Endothelial cell of umbilical vein (primary cell): ENCODE measurements at regions of chr14 and their contacts with region 1.

Region 1: GRCh38 chr14:22556990-22557623 is 31.9 kb downstream of the DAD1 start:
- DNase-seq: peak; percentile 71
- H3K4me3 ChIP-seq: peak overlapping the region in 2 of 3 experiments; percentile 10 to 14
- H3K27ac ChIP-seq: peak overlapping the region; percentile 88
- H3K4me1 ChIP-seq: peaks cover 52% of the 10 kb centered on the region
- H3K27me3 ChIP-seq: no peaks in the 10 kb centered on the region
- CTCF ChIP-seq: peak; percentile 84 to 99
- POLR2A ChIP-seq: no peak

Region 2: GRCh38 chr14:21978184-21978998 is 578.7 kb before region 1 on chr14:
- CTCF ChIA-PET with region 1: no interaction called
- POLR2A ChIA-PET with region 1: no interaction called
- dilution Hi-C with region 1: no loop called
- intact Hi-C with region 1: no loop called
- DNase-seq: peak; percentile 41
- H3K4me3 ChIP-seq: no peak overlapping the region
- H3K27ac ChIP-seq: no peak overlapping the region
- H3K4me1 ChIP-seq: no peaks in the 10 kb centered on the region
- H3K27me3 ChIP-seq: peaks cover 7 to 10% of the 10 kb centered on the region in 2 experiments
- CTCF ChIP-seq: peak; percentile 78 to 87
- POLR2A ChIP-seq: no peak

Region 3: DNA sequence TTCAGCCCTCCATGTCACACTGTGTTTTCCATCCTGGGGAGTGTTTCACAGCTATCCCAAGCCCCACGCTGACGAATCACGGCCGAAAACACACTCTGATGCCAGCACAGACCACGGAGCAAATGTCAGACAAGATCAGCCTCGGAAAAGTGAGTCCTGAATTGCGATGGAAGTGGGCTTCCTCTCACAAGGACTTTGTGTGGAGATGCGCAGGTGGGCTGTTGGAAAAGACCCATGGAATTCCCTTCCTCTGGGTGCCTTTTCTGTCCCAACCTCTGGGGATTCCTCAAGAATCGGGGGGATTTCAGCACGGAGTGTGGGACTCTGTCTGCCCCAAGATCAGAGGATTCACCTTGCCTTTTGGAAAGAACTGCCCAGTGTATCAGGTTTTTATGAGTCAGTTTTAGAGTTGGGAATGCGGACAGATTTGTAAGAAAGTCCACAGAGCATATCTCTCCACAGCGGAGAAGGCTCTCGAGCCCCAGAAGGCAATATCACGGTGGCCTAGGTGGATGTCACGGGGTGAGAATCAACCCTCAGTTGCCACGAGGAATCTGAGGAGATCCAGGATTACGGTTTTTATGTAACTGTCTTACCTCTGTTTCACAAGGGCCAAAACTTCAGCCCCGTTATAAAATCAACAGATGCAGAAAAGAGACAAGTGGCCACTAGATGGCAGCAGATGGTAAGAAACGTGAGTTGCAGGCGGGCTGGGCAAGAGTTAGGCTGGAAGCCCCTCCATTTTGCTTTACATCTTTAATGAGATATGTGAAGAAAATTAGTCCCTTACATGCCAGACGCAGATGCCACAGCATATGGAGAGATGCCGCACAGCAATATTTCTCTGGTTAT is 170.0 kb before region 1 on chr14:
- CTCF ChIA-PET with region 1: interaction called, 35 read pairs
- POLR2A ChIA-PET with region 1: no interaction called
- dilution Hi-C with region 1: no loop called
- intact Hi-C with region 1: loop called (anchors 1 kb)
- DNase-seq: peak; percentile 77
- H3K4me3 ChIP-seq: no peak overlapping the region
- H3K27ac ChIP-seq: no peak overlapping the region
- H3K4me1 ChIP-seq: peaks cover 6% of the 10 kb centered on the region
- H3K27me3 ChIP-seq: peaks cover 6 to 15% of the 10 kb centered on the region in 2 experiments
- CTCF ChIP-seq: peak; percentile 68 to 70
- POLR2A ChIP-seq: no peak

Region 4: DNA sequence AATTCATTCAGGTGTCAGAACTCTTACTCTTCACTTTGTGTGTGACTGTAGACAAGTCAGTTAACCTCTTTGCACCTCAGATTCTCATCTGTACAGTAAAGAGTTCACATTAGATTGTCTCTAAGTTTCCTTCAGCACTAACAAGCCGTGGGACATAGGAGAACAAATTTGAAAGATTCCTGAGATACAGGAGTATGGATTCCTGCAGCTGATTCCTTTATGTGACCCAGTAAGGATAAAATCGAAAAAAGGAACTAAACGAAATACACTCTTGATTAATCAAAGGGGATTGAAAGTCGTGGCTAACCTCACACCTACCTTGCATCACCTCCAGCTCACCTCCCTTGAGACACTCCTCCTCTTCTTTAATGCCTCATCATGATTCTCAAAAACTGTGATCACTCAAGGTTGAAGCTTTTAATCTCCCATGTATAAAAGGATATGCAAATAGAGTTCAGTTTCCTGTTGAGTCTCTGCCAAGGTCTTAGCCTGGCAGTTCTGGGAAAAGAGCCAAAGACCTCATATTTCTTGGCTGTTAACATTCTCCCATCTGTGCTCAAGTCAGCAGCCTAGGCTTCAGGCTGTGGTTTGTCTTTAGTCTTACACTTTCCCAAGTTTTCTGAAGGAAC is 124.6 kb before region 1 on chr14:
- CTCF ChIA-PET with region 1: no interaction called
- POLR2A ChIA-PET with region 1: no interaction called
- dilution Hi-C with region 1: no loop called
- intact Hi-C with region 1: no loop called
- DNase-seq: peak; percentile 97
- H3K4me3 ChIP-seq: no peak overlapping the region
- H3K27ac ChIP-seq: no peak overlapping the region
- H3K4me1 ChIP-seq: peaks cover 29% of the 10 kb centered on the region
- H3K27me3 ChIP-seq: peaks cover 4 to 6% of the 10 kb centered on the region in 2 experiments
- CTCF ChIP-seq: no peak
- POLR2A ChIP-seq: no peak

Region 5: GRCh38 chr14:22545842-22546721 is 11.0 kb before region 1 on chr14:
- CTCF ChIA-PET with region 1: interaction called, 19 read pairs
- POLR2A ChIA-PET with region 1: no interaction called
- dilution Hi-C with region 1: no loop called
- intact Hi-C with region 1: no loop called
- DNase-seq: peak; percentile 93
- H3K4me3 ChIP-seq: no peak overlapping the region
- H3K27ac ChIP-seq: peak overlapping the region; percentile 86
- H3K4me1 ChIP-seq: peaks cover 48% of the 10 kb centered on the region
- H3K27me3 ChIP-seq: no peaks in the 10 kb centered on the region
- CTCF ChIP-seq: no peak
- POLR2A ChIP-seq: no peak

Region 6: DNA sequence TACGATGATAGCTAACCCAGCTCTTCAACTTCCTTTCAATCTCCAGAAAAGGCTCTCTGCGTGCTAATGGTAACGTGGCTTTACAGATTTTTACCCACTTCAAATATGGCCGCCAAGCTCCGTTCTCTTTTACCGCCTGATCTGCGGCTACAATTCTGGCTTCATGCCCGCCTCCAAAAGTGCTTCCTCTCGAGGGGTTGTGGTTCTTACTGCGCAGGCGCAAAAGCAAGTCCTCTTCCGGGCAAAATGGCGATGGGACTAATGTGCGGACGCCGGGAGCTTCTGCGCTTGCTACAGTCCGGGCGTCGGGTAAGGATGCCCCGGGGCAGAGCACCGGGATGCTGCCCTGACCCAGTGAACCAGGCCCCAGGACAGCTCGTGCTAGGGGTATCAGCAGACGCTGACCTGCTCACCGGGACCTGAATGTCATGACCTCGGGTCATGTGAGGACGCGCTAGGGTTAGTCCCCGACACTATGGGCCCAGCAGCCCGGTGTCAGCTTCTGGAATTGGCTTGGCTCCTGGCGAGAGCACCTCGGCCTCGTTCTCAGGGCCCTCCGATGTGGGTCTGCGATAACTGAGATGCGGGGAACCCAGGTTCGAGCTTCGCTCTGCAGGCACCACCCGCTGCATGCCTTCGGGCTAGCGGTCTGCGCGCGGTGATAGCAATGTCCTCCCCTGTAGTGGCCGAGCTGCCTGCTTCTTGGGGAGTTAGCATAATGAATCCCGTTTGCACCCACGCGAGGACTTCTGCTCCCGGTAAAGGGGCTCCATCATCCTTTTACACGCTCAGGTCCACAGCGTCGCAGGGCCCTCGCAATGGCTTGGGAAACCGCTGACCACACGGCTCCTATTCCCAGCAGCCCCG is 209.6 kb after region 1 on chr14 and contains the start of gene OXA1L:
- CTCF ChIA-PET with region 1: no interaction called
- POLR2A ChIA-PET with region 1: no interaction called
- dilution Hi-C with region 1: no loop called
- intact Hi-C with region 1: loop called (anchors 5 kb)
- DNase-seq: peak; percentile 98
- H3K4me3 ChIP-seq: peak within 1 kb of the TSS; percentile 77 to 99 (median 92)
- H3K27ac ChIP-seq: peak within 1 kb of the TSS; percentile 84
- H3K4me1 ChIP-seq: peaks cover 24% of the 10 kb centered on the region
- H3K27me3 ChIP-seq: no peaks in the 10 kb centered on the region
- CTCF ChIP-seq: no peak
- POLR2A ChIP-seq: peak; percentile 81
- total RNA-seq, gene OXA1L: 200 and 212 TPM in 2 replicates

Region 7: GRCh38 chr14:22872033-22872832 is 315.1 kb after region 1 on chr14:
- CTCF ChIA-PET with region 1: interaction called, 4 read pairs
- POLR2A ChIA-PET with region 1: no interaction called
- dilution Hi-C with region 1: no loop called
- intact Hi-C with region 1: loop called (anchors 1 kb)
- DNase-seq: peak; percentile 87
- H3K4me3 ChIP-seq: peak overlapping the region; percentile 68 to 78 (median 76)
- H3K27ac ChIP-seq: peak overlapping the region; percentile 89
- H3K4me1 ChIP-seq: peaks cover 18% of the 10 kb centered on the region
- H3K27me3 ChIP-seq: no peaks in the 10 kb centered on the region
- CTCF ChIP-seq: peak; percentile 90 to 97
- POLR2A ChIP-seq: peak; percentile 59

Region 8: DNA sequence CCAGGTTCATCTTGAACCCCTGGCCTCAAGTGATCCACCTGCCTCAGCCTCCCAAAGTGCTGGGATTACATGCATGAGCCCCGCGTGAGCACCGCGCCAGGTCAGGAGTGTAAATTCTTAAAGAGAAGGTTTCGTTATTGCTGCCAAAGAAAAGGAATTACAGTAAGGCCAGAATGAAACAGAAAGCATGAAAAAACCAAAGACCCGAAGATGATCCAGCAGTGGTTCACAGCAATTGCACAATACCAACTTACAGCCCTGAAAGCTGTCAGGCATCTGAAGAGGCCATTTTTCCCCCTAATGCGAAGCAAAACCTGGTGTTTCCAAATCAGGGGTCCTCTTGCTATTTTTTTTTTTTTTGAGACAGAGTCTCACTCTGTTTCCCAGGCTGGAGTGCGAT is 351.5 kb after region 1 on chr14:
- CTCF ChIA-PET with region 1: no interaction called
- POLR2A ChIA-PET with region 1: no interaction called
- dilution Hi-C with region 1: no loop called
- intact Hi-C with region 1: no loop called
- DNase-seq: no peak
- H3K4me3 ChIP-seq: no peak overlapping the region
- H3K27ac ChIP-seq: no peak overlapping the region
- H3K4me1 ChIP-seq: no peaks in the 10 kb centered on the region
- H3K27me3 ChIP-seq: no peaks in the 10 kb centered on the region
- CTCF ChIP-seq: no peak
- POLR2A ChIP-seq: no peak

Region 9: DNA sequence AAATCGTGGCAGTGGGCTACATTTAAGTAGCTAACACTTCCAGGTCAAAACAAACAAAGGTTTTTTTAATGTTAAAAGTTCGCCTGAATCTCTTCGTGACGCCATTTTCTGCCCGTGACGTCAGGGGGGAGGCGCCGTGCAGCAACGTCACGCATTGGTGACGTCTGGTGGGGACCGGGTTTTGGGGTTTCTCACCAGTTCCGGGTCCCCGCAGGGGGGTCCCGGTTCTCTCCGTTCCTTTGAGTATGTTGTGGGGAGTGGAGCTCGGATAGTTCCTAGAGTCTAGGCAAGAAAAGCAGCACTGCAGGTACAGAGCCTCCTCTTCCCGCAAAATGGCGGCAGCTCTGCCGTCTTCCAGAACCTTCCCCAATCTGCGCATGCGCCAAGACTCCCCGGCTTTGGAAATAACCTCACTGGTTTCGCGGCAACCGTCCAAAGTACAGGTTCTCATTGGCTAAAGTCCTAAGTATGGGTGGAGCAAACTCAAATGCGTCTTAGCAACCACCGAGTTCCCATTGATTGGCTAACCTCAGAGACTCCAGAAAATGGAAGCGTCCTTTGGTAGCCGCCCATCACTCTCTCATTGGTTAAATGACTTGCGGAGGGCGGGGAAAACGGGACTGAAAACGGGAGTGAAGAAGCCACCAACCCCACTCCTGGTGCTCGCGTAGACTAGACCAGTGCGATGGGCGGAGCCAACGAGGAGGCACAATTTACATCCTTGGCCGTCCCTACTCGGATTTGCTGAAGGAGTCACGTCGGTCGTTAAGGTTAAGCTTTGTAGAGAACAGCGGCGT is 361.9 kb after region 1 on chr14 and contains the start of gene RBM23:
- CTCF ChIA-PET with region 1: no interaction called
- POLR2A ChIA-PET with region 1: no interaction called
- dilution Hi-C with region 1: no loop called
- intact Hi-C with region 1: loop called (anchors 5 kb)
- DNase-seq: peak; percentile 100
- H3K4me3 ChIP-seq: peak within 1 kb of the TSS; percentile 70 to 90 (median 84)
- H3K27ac ChIP-seq: peak within 1 kb of the TSS; percentile 96
- H3K4me1 ChIP-seq: peaks cover 12% of the 10 kb centered on the region
- H3K27me3 ChIP-seq: no peaks in the 10 kb centered on the region
- CTCF ChIP-seq: no peak
- POLR2A ChIP-seq: peak; percentile 67
- total RNA-seq, gene RBM23: 61.0 and 68.9 TPM in 2 replicates